Activated CD4-positive, alpha-beta memory T cell treated with anti-CD3 and anti-CD28 coated beads, Interleukin-2, amount 10 ng/mL, durations not matched to agents 7 days and 5 days (primary cell): ENCODE measurements at regions of chr5 and their contacts with region 1.

Region 1: GRCh38 chr5:141598391-141599350 is 20.1 kb downstream of the DIAPH1 start:
- DNase-seq: no peak
- H3K4me3 Mint-ChIP-seq: no peak overlapping the region
- H3K27ac Mint-ChIP-seq: peak overlapping the region; percentile 73
- H3K4me1 Mint-ChIP-seq: peaks cover 75% of the 10 kb centered on the region
- H3K27me3 Mint-ChIP-seq: no peaks in the 10 kb centered on the region

Region 2: DNA sequence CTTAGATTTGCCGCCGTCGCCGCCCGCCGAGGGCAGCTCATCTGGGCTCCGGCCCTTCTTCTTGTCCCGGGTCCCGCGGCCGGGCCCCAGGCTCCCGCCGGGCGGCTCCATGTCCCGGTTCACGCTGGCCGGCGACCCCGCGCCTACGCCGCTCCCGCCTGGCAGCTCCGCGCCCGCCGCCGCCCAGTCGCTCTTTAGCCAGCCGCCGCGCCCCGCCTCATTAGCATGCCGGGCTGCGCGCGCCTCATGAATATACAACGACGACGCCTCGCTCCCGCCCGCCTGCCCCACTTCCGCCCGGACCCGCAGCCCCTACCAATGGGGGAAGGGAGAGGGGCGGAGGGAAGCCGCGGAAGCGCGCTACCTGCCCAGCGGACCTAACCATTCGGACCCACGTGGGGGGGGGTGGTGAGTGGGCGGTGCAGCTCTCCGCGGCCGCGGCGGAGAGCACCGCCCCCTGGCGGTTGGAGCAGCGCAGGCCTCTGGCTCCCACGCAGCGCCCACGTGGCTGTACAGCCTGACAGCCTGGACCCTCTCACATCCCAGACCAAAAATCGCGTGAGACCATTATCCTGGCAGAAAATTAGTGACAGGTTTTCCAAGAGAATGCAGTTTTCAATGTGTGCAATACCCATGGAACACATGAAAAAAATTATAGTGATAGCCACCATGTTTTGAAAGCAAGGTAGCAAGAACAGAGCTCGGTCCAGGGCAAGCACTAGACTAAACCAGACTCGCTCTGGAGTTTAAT is 20.3 kb after region 1 on chr5 and contains the start of gene DIAPH1:
- CTCF ChIA-PET with region 1: interaction called, 436 read pairs
- POLR2A ChIA-PET with region 1: interaction called, 124 read pairs
- DNase-seq: peak; percentile 98
- H3K4me3 Mint-ChIP-seq: peak within 1 kb of the TSS; percentile 100
- H3K27ac Mint-ChIP-seq: peak within 1 kb of the TSS; percentile 92
- H3K4me1 Mint-ChIP-seq: peaks cover 53% of the 10 kb centered on the region
- H3K27me3 Mint-ChIP-seq: no peaks in the 10 kb centered on the region
- total RNA-seq, gene DIAPH1: 317 to 323 TPM

Region 3: GRCh38 chr5:141641634-141642267 is 43.1 kb after region 1 on chr5:
- CTCF ChIA-PET with region 1: interaction called, 150 read pairs
- POLR2A ChIA-PET with region 1: interaction called, 33 read pairs
- DNase-seq: no peak
- H3K4me3 Mint-ChIP-seq: no peak overlapping the region
- H3K27ac Mint-ChIP-seq: peak overlapping the region; percentile 58
- H3K4me1 Mint-ChIP-seq: peaks cover 41% of the 10 kb centered on the region
- H3K27me3 Mint-ChIP-seq: no peaks in the 10 kb centered on the region

Region 4: GRCh38 chr5:141650851-141651727 is 52.4 kb after region 1 on chr5 and contains the start of gene FCHSD1:
- CTCF ChIA-PET with region 1: no interaction called
- POLR2A ChIA-PET with region 1: interaction called, 10 read pairs
- DNase-seq: peak; percentile 89
- H3K4me3 Mint-ChIP-seq: peak within 1 kb of the TSS; percentile 98
- H3K27ac Mint-ChIP-seq: peak within 1 kb of the TSS; percentile 89
- H3K4me1 Mint-ChIP-seq: peaks cover 32% of the 10 kb centered on the region
- H3K27me3 Mint-ChIP-seq: no peaks in the 10 kb centered on the region
- total RNA-seq, gene FCHSD1: 69.8 to 71.8 TPM